ENCODE measurements at regions of chr6 and their contacts with region 1.

Region 1: DNA sequence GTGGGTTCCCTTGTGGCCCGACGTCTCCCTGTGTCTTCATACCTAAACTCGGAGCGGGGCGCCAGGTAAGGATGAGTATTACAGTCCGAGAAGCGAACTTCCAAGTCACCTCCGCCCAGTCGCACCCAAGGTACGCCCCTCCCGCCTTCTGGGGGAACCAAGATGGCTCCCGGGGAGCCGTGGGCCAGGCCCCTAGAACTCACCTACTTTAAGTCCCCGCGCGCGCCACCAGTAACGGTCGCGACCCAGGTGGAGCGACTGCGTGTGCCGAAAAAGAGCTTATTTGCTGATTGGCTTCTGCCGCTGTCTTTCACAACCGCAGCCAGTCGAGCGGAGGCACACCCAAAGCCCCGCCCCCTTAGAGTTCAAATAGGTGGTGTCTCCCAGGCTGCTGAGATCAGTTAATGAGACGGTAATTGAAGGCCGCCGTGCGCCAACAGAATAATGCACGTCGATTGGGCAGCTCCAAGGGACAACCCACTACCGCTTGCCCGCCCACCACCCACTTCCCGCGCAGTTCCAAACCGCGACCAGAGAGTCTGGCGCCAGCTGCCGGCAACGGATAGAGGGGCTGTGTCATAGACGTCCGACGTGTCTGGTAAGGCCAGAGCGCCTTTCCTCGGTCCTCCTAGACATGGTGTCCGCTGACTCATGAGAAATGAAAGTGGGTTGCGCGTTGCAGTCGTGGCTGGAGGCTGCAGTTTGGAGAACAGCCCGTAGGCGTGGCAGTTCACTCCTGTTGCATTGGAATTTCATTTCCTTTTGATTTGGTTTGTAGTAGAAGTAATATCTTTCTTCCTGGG is at the start of gene MDC1:
- DNase-seq: peak; percentile 96 to 100 (median 98)
- ATAC-seq: peak; percentile 78
- H3K4me3 ChIP-seq: peak within 1 kb of the TSS; percentile 56
- H3K27ac ChIP-seq: peak within 1 kb of the TSS; percentile 98
- H3K4me1 ChIP-seq: peaks cover 7 to 15% of the 10 kb centered on the region in 2 experiments
- H3K27me3 ChIP-seq: no peaks in the 10 kb centered on the region
- CTCF ChIP-seq: peak in 2 of 3 experiments; percentile 38 to 52; a peak in 3 of 6 replicates
- EP300 ChIP-seq: peak; percentile 84
- POLR2A ChIP-seq: peak; percentile 91
- RAD21 ChIP-seq: peak; percentile 24 to 32; a peak in 3 of 4 replicates
- polyA plus RNA-seq, gene MDC1: 8.2 to 8.8 TPM

Region 2: GRCh38 chr6:30556066-30556905 is 161.0 kb before region 1 on chr6 and contains the start of gene GNL1:
- CTCF ChIA-PET with region 1: no interaction called
- POLR2A ChIA-PET with region 1: interaction called, 4 read pairs
- in situ Hi-C with region 1: no loop called
- intact Hi-C with region 1: loop called (anchors 2 kb)
- DNase-seq: peak; percentile 97 to 99 (median 98)
- ATAC-seq: peak; percentile 90
- H3K4me3 ChIP-seq: peak within 1 kb of the TSS; percentile 80
- H3K27ac ChIP-seq: peak within 1 kb of the TSS; percentile 94
- H3K4me1 ChIP-seq: peaks cover 17 to 23% of the 10 kb centered on the region in 2 experiments; a peak in 4 of 5 replicates
- H3K27me3 ChIP-seq: no peaks in the 10 kb centered on the region
- CTCF ChIP-seq: no peak
- EP300 ChIP-seq: no peak
- POLR2A ChIP-seq: peak; percentile 8
- RAD21 ChIP-seq: no peak
- polyA plus RNA-seq, gene GNL1: 0.73 to 1.3 TPM

Region 3: DNA sequence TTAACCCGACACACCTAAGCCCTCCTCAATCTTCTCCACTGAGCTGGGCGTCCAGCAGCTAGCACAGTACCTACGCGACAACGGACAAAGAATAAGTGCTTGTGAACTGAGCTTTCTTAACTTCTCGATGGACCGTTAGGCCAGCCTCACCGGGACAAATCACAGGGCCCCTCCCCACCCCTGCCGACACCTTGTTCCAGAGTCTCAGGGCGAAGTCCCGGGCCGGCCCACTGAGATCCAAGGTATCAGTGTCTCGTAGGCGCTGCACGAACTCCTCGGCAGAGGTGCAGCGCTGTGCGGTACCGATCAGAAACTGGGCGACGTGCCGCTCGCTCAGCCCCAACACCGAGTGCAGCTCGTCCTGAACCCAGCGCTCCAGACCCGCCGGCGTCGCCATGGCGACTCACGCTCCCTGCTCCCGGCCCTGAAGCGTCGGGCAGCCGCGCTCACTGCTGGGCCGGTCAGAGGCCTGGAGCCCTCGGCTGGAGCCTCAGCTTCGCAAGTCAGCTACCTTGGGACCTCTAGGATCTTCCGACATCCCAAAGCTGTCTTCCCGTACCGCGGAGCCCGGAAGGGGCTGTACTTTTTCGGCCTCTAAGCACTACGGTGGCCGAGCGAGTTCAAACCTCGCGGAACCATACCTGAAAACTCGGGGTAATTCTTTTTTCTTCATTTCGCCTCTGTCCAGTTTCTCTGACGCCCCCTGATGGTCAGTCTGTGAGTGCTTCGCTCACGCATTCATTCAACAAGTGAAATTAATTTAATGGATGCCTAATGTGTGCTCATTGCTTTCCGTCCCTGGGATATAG is 44.6 kb before region 1 on chr6 and contains the start of gene DHX16:
- CTCF ChIA-PET with region 1: interaction called, 92 read pairs
- POLR2A ChIA-PET with region 1: interaction called, 5 read pairs
- in situ Hi-C with region 1: loop called (anchors 10 kb)
- intact Hi-C with region 1: no loop called
- DNase-seq: peak; percentile 85 to 99 (median 90)
- ATAC-seq: peak; percentile 89
- H3K4me3 ChIP-seq: peak within 1 kb of the TSS; percentile 83
- H3K27ac ChIP-seq: peak within 1 kb of the TSS; percentile 60
- H3K4me1 ChIP-seq: peaks cover 7 to 27% of the 10 kb centered on the region in 2 experiments
- H3K27me3 ChIP-seq: no peaks in the 10 kb centered on the region
- CTCF ChIP-seq: peak; percentile 85 to 98 (median 97)
- EP300 ChIP-seq: peak; percentile 58; the same call in 1 of the 2 replicates
- POLR2A ChIP-seq: peak; percentile 81
- RAD21 ChIP-seq: peak; percentile 76 to 77
- polyA plus RNA-seq, gene DHX16: 14.6 to 15.3 TPM

Region 4: GRCh38 chr6:30678964-30679726 is 38.1 kb before region 1 on chr6:
- CTCF ChIA-PET with region 1: interaction called, 92 read pairs
- POLR2A ChIA-PET with region 1: interaction called, 118 read pairs
- in situ Hi-C with region 1: loop called (anchors 10 kb)
- intact Hi-C with region 1: loop called (anchors 1 kb)
- DNase-seq: peak; percentile 81 to 95 (median 87)
- ATAC-seq: peak; percentile 79
- H3K4me3 ChIP-seq: peak overlapping the region; percentile 1; the same call in 1 of the 2 replicates
- H3K27ac ChIP-seq: no peak overlapping the region
- H3K4me1 ChIP-seq: peaks cover 29 to 48% of the 10 kb centered on the region in 2 experiments
- H3K27me3 ChIP-seq: no peaks in the 10 kb centered on the region
- CTCF ChIP-seq: peak; percentile 97 to 99 (median 98)
- EP300 ChIP-seq: peak; percentile 30; the same call in 1 of the 2 replicates
- POLR2A ChIP-seq: no peak
- RAD21 ChIP-seq: peak; percentile 98 to 99

Region 5: DNA sequence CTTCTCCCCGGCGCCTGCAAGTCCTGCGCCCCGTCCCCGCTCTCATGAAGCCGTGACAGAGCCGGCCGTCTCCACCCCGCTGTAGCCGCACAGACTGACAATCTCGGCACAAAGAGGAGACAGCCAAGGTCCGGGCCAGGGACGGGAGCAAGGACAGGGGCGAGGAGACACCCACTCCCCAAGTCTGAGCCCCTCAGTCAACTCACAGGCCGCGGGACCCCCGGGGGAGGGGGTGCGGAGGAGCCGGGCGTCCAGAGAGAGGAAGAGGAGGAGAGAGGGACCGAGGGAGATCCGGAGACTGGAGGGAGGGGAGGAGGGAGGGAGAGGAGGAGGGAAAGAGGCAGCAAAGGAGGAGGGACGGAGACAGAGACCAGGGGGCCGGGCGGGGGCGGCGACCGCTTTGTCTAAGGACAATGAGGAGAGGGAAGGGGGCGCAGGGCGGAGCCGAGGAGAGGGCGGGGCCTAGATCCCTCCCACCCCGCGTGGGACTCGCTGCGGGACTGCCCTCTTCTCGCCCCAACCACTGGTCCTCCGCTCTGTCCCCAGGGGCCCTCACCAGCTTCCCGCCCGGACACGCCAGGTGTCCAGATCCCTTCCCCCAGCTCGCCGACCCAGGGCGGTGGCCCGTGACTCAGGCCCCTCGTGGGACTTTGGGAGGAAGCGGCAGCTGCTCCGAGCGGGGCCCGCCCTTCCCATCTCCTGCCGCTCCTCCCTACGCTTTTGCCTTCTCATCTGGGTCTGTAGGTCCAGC is 30.2 kb before region 1 on chr6:
- CTCF ChIA-PET with region 1: interaction called, 92 read pairs
- POLR2A ChIA-PET with region 1: interaction called, 524 read pairs
- in situ Hi-C with region 1: no loop called
- intact Hi-C with region 1: loop called (anchors 1 kb)
- DNase-seq: peak; percentile 90 to 96 (median 92)
- ATAC-seq: peak; percentile 59
- H3K4me3 ChIP-seq: peak overlapping the region; percentile 81
- H3K27ac ChIP-seq: peak overlapping the region; percentile 88
- H3K4me1 ChIP-seq: peaks cover 50 to 88% of the 10 kb centered on the region in 2 experiments
- H3K27me3 ChIP-seq: no peaks in the 10 kb centered on the region
- CTCF ChIP-seq: no peak
- EP300 ChIP-seq: peak; percentile 63; the same call in 1 of the 2 replicates
- POLR2A ChIP-seq: peak; percentile 76
- RAD21 ChIP-seq: no peak

Region 6: GRCh38 chr6:30730601-30731435 is 13.6 kb after region 1 on chr6:
- CTCF ChIA-PET with region 1: interaction called, 7 read pairs
- POLR2A ChIA-PET with region 1: interaction called, 50 read pairs
- in situ Hi-C with region 1: no loop called
- intact Hi-C with region 1: no loop called
- DNase-seq: peak; percentile 79 to 86 (median 84)
- ATAC-seq: peak; percentile 90
- H3K4me3 ChIP-seq: no peak overlapping the region
- H3K27ac ChIP-seq: 0 out of 3 replicates have a peak overlapping the region, but pooled peaks have one; percentile 18
- H3K4me1 ChIP-seq: peaks cover 0 to 7% of the 10 kb centered on the region in 2 experiments; a peak in 3 of 5 replicates
- H3K27me3 ChIP-seq: no peaks in the 10 kb centered on the region
- CTCF ChIP-seq: peak; percentile 88 to 95 (median 90)
- EP300 ChIP-seq: no peak
- POLR2A ChIP-seq: no peak; the same call in 1 of the 2 replicates
- RAD21 ChIP-seq: peak; percentile 69 to 90

Region 7: DNA sequence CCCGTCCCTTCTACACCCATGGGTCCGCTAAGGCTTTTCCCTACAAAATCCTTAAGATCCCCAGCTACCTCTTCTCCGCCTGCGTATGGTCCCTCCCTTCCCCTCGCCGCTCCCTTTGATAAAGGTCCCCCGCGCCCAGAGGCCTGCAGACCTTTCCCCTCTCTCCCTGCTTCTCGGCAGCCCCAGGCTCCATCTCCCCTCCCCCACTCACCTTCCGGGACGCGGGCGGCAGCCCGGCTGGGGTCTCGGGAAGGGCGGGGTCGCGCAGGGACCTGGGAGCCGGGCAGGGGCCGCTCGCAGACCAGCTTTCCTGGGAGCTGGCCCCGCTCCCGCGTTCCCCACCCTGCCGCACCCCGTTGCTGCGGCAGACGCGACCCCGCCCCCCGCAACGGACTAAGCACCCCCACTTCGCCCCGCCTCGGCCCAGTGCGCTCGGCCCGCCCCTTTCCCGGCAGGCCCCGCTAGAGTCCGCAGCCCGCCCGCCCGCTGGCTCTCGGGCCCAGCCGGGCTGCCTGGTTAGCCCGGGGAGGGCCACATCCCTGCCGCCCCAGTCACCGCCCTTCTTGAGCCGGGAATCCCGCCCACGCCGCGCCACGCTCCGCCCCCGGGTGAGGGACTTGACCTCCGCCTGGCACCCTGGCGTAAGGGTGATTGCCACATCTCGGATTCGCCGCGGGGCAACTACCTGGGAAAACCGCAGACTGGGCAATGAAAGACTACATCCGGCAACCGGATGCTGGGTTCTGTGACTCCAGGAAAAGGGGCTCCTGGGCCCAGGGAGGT is 25.3 kb after region 1 on chr6 and contains the start of gene FLOT1:
- CTCF ChIA-PET with region 1: no interaction called
- POLR2A ChIA-PET with region 1: interaction called, 4 read pairs
- in situ Hi-C with region 1: no loop called
- intact Hi-C with region 1: loop called (anchors 2 kb)
- DNase-seq: peak; percentile 97 to 98 (median 97)
- ATAC-seq: peak; percentile 92
- H3K4me3 ChIP-seq: peak within 1 kb of the TSS; percentile 91
- H3K27ac ChIP-seq: peak within 1 kb of the TSS; percentile 87
- H3K4me1 ChIP-seq: peaks cover 38 to 47% of the 10 kb centered on the region in 2 experiments
- H3K27me3 ChIP-seq: no peaks in the 10 kb centered on the region
- CTCF ChIP-seq: 0 out of 6 replicates have a peak, but pooled peaks of 1 of the 3 experiments have one; percentile 2
- EP300 ChIP-seq: peak; percentile 36
- POLR2A ChIP-seq: peak; percentile 81
- RAD21 ChIP-seq: peak in 1 of 2 experiments; percentile 41; a peak in 3 of 4 replicates
- polyA plus RNA-seq, gene FLOT1: 11.7 to 12.0 TPM

Region 8: GRCh38 chr6:30844091-30844535 is 126.9 kb after region 1 on chr6:
- CTCF ChIA-PET with region 1: no interaction called
- POLR2A ChIA-PET with region 1: no interaction called
- in situ Hi-C with region 1: no loop called
- intact Hi-C with region 1: no loop called
- DNase-seq: no peak
- ATAC-seq: no peak
- H3K4me3 ChIP-seq: no peak overlapping the region
- H3K27ac ChIP-seq: no peak overlapping the region
- H3K4me1 ChIP-seq: peaks cover 27 to 36% of the 10 kb centered on the region in 2 experiments; a peak in 3 of 5 replicates
- H3K27me3 ChIP-seq: no peaks in the 10 kb centered on the region
- CTCF ChIP-seq: no peak
- EP300 ChIP-seq: no peak
- POLR2A ChIP-seq: no peak
- RAD21 ChIP-seq: no peak

Region 9: GRCh38 chr6:30942338-30943060 is 225.3 kb after region 1 on chr6:
- CTCF ChIA-PET with region 1: no interaction called
- POLR2A ChIA-PET with region 1: no interaction called
- in situ Hi-C with region 1: no loop called
- intact Hi-C with region 1: no loop called
- DNase-seq: peak; percentile 83 to 91 (median 84)
- ATAC-seq: peak; percentile 94
- H3K4me3 ChIP-seq: no peak overlapping the region
- H3K27ac ChIP-seq: no peak overlapping the region
- H3K4me1 ChIP-seq: peaks cover 8 to 11% of the 10 kb centered on the region in 2 experiments
- H3K27me3 ChIP-seq: peaks cover 37 to 80% of the 10 kb centered on the region in 2 experiments
- CTCF ChIP-seq: peak; percentile 57 to 63 (median 61)
- EP300 ChIP-seq: 0 out of 2 replicates have a peak, but pooled peaks have one; percentile 6
- POLR2A ChIP-seq: no peak
- RAD21 ChIP-seq: peak; percentile 25 to 64; a peak in 3 of 4 replicates

Region 10: DNA sequence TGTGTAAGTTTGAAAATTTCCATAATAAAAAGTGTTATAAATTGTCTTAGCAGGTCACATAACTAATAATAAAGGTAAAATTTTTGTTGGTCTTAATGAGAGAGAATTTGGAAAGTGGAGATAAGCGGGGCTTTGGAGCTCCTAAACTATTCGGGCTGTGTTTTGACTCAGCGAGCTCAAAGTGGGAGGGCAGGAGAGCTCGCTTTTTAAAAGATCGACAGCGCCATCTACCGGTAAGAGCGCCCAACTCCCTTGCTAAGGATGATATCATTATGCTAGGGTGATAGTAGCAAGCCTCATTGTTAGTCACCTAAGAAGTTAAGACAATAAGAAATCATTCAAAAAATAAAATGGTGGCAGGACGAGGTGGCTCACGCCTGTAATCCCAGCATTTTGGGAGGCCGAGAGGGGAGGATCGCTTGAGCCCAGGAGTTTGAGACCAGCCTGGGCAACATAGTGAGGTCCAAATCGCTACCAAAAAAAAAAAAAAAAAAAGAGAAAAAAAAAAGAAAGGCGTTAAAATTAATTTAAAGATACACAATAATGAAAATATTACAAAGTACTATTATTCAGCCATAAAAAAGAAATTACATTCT is 370.3 kb after region 1 on chr6:
- CTCF ChIA-PET with region 1: no interaction called
- POLR2A ChIA-PET with region 1: no interaction called
- in situ Hi-C with region 1: no loop called
- intact Hi-C with region 1: no loop called
- DNase-seq: peak; percentile 87 to 93 (median 88)
- ATAC-seq: peak; percentile 94
- H3K4me3 ChIP-seq: no peak overlapping the region
- H3K27ac ChIP-seq: no peak overlapping the region
- H3K4me1 ChIP-seq: peaks cover 8 to 20% of the 10 kb centered on the region in 2 experiments
- H3K27me3 ChIP-seq: no peaks in the 10 kb centered on the region; a peak in 1 of 5 replicates
- CTCF ChIP-seq: peak; percentile 80 to 93 (median 90)
- EP300 ChIP-seq: no peak
- POLR2A ChIP-seq: no peak
- RAD21 ChIP-seq: peak; percentile 83 to 88

Measured in K562 (cell line).